T-cell (primary cell): ENCODE measurements at regions of chr12 and their contacts with region 1.

Region 1: DNA sequence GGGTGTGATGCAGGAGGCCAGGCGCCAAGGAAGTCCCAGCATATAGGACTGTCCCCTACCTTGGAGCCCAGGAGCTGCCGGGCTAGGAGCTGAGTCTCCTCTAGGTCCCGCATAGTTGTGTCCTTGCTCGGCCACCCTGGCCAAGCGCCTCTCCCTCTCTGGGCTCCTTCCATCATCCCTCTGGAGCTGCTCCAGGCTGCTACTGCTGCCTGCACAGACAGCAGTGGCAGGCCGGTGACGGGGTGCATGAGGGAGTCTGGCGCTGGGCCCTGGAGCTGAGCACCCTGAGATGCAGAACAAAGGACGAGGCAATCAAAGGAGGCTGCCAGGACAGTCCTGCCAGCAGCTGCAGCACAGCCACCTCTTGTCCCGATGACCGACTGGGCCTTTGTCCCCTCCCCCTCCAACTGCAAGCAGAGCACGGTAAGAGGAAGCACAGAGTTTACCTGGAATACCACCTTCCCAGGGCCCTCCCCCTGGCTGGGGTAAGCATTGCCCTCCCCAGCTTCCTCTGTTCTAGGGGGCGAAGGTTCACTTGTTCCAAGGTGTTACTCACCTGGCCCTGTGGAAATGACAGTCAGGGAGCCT is 10.4 kb downstream of the DTX1 start:
- DNase-seq: no peak
- ATAC-seq: no peak
- H3K4me3 ChIP-seq: no peak overlapping the region
- H3K4me3 Mint-ChIP-seq: no peak overlapping the region
- H3K27ac ChIP-seq: no peak overlapping the region
- H3K27ac Mint-ChIP-seq: peak overlapping the region; percentile 58 to 61
- H3K4me1 ChIP-seq: peaks cover 4 to 80% of the 10 kb centered on the region in 2 experiments
- H3K4me1 Mint-ChIP-seq: peaks cover 42 to 83% (median 46%) of the 10 kb centered on the region in 3 donors
- H3K27me3 ChIP-seq: no peaks in the 10 kb centered on the region
- H3K27me3 Mint-ChIP-seq: no peaks in the 10 kb centered on the region

Region 2: GRCh38 chr12:113131556-113131955 is 64.6 kb after region 1 on chr12:
- CTCF ChIA-PET with region 1: interaction called in 1 of 2 experiments, 9 read pairs
- POLR2A ChIA-PET with region 1: interaction called in 1 of 2 experiments, 12 read pairs
- DNase-seq: no peak
- ATAC-seq: no peak
- H3K4me3 ChIP-seq: no peak overlapping the region
- H3K4me3 Mint-ChIP-seq: no peak overlapping the region
- H3K27ac ChIP-seq: no peak overlapping the region
- H3K27ac Mint-ChIP-seq: no peak overlapping the region
- H3K4me1 ChIP-seq: peaks cover 5 to 20% of the 10 kb centered on the region in 2 experiments
- H3K4me1 Mint-ChIP-seq: peaks cover 10 to 22% (median 14%) of the 10 kb centered on the region in 3 donors
- H3K27me3 ChIP-seq: peaks cover 0 to 22% of the 10 kb centered on the region in 2 experiments
- H3K27me3 Mint-ChIP-seq: peaks cover 0 to 5% of the 10 kb centered on the region in 2 donors

Region 3: DNA sequence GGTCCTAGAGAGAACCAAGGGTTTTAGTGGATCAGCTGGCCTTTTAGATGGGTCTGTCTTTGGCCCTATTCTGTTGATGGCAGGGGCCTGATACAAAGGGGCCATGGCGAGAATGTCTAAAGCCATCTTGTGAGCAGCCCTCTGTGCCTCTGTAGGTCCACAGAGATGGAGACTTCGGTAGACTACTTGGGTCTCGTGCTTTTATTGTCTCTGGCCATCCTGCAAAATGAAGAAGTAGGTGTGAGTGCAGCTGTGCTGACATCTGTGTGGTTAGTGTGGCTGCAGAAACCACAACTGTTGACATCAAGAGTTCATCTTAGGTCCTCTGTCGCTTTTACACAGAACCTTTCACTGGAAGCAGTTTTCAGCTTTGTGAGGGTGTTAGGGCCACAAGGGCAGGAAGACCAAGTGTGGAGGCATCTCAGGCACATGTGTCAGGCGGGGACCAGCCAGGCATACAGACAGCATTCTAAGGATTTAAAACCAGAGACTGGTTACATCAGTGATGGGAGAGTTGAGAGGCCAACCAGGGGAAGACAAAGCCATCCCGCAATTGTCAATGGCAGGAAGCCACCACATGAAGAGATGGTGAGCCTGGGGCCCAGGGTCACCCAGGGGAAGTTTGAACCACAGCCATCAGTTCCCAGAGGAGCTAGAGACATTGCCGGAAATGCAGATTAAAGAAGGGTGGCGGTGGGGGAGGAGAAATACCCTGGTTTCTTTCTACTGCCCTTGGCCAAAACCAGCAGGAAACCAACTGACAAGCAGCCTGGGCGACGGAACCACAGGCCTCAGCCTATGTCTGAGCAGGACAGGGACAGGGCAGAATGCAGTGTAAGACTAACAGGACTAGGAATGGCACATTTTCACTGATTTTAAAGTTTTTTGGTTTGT is 141.4 kb after region 1 on chr12:
- CTCF ChIA-PET with region 1: no interaction called
- POLR2A ChIA-PET with region 1: no interaction called
- DNase-seq: peak; percentile 5 to 88 (median 50)
- ATAC-seq: peak; percentile 74 to 82 (median 80)
- H3K4me3 ChIP-seq: no peak overlapping the region
- H3K4me3 Mint-ChIP-seq: peak overlapping the region; percentile 54 to 77 (median 59)
- H3K27ac ChIP-seq: peak overlapping the region; percentile 81
- H3K27ac Mint-ChIP-seq: peak overlapping the region; percentile 94 to 97
- H3K4me1 ChIP-seq: peaks cover 25 to 48% of the 10 kb centered on the region in 2 experiments
- H3K4me1 Mint-ChIP-seq: peaks cover 40 to 53% (median 46%) of the 10 kb centered on the region in 3 donors
- H3K27me3 ChIP-seq: no peaks in the 10 kb centered on the region
- H3K27me3 Mint-ChIP-seq: no peaks in the 10 kb centered on the region